Posterior vena cava (tissue), 2 donors: ENCODE measurements at regions of chrX and their contacts with region 1.

Region 1: DNA sequence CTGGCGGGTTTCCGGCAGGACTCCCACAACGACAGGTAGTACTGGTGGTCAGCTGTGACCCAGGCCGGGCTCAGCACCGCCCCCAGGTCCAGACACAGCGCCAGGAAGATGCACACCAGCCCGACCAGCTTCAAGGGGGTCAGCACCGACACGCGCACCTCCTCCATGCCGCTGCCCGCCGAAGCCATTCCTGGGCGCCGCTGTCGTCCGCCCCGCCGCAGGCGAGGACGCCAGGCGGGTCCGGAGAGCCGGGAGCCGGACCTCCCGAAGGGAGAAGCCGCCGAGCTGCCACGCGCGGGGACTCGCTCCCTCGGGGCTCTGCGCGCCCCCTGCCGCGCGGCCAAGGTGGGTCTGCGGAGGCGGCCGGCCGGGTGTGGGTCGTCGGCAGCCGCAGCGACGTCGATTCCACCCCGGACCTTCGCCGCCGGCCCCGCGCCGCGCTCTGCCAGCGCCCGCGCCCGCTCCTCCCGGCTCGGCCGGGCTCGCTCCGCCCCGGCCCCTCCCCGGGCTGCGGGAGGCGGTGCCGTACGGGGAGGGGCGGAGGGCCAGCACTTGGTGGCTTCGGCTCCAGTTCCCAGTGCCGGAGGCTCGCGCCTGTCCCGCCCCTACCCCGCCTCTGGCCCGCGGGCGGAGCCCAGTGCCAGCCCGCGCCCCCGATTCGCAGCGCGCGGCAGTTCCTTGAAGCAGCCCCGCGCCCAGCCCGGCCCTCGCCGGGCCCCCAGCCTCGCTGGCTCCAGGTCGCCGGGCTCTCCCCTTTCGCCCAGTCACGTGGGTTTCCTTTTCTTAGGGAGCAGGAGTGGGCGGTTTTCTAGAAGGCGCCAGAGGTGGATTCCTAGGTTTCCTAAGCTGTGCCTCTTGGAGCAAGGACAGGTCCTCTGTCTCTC is at the start of gene TMEM47:
- DNase-seq: peak; percentile 83
- total RNA-seq, gene TMEM47: 139 to 305 TPM

Region 2: GRCh38 chrX:34638116-34638515 is 19.0 kb before region 1 on chrX:
- intact Hi-C with region 1: no loop called
- DNase-seq: no peak

Region 3: DNA sequence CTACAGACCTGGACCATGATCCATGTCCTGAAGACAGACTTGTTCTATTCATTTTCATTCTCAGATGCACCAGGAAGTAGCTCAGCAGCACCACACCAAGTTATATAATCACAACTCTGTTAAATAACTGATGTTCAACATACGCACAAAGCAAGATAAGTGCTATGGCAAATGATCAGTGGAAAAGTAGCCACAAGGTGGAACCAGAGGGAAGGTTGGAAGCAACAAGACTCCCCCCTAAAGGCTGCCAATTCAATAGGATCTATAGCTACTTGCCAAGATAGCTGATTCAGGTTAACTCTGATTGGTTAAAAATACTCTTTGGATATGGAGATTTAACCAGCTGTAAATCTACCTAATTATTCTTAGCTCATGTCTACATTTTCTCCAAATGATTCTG is 261.8 kb after region 1 on chrX:
- intact Hi-C with region 1: loop called in 1 of 2 experiments (anchors 5 kb)
- DNase-seq: no peak